ENCODE measurements at regions of chr9 and their contacts with region 1.

Region 1: DNA sequence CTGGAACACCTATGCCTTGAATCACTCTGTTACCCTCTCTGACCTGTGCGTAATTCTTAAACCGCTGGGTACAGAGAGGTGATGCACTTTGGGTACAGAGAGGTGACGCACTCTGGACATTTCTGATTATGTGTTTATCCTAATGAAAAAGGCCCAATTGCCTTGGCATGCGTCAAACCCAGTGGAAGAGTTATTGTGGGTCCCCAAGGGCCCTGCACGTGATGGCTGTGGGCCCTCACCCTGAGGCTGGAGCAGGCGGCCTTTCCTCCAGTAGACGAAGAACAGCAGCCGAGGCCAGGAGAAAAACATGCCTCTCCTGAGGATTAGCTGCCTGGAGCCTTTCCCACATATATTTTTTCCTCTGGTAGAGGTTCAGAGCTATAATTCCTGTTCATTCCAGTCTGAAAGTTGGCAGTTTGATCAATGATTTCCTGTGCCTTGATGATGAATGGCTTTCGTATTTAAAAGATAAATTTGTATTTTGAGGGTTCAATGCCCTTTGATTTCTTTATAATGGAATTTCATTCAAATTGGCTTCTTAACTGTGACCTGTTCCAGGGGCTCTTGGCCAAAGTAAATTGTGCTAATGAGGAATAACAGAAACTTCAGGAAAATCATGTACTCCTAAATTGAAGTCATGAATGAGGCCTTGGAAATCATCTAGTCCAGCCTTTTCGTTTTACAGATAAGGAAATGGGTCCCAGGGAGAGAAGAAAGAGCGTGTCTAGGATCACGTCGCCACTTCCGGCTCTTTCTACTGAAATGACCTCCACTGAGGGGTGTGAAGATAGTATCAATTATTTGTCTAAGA is 22.8 kb downstream of the ACER2 start:
- DNase-seq: peak; percentile 72 to 73
- ATAC-seq: peak; percentile 83 to 95 (median 93)
- H3K4me3 ChIP-seq: no peak overlapping the region
- H3K27ac ChIP-seq: peak overlapping the region; percentile 18 to 82 (median 75)
- H3K4me1 ChIP-seq: peaks cover 8 to 38% (median 19%) of the 10 kb centered on the region in 9 donors
- H3K27me3 ChIP-seq: no peaks in the 10 kb centered on the region
- CTCF ChIP-seq: no peak

Region 2: DNA sequence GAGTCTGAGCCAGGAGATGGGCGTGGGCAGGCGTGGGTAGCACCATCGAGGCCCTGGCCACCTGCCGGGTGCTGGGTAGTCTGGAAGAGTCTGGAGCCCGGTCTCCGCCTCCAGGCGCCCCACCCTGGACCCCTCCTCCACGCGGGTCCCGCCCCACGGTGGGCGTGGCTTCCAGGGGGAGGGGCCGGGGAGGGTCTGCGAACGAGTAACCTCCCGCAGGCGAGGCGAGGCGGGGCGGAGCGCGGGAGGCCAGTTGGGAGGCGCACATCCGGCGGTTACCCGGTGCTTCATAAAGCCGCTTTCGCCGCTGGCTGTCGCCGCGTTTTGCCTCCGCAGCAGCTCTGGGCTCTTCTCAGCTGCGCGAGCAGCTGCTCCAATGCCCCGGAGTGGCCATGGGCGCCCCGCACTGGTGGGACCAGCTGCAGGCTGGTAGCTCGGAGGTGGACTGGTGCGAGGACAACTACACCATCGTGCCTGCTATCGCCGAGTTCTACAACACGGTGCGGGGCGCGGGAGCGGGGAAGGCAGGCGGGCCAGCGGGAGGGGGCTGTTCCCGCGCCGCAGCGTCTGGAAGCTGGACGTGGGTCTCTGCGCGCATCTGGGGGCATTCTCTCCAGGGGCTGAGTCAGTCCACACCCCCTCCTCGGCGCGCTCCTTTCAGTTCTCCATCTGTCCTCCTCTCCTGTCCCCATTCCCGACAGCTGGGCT is 22.7 kb before region 1 on chr9 and contains the start of gene ACER2:
- intact Hi-C with region 1: loop called in 1 of 10 experiments (anchors 1 kb)
- DNase-seq: peak; percentile 96 to 98
- ATAC-seq: peak; percentile 97 to 100 (median 98)
- H3K4me3 ChIP-seq: peak within 1 kb of the TSS; percentile 70 to 98 (median 92)
- H3K27ac ChIP-seq: peak within 1 kb of the TSS; percentile 82 to 96 (median 90)
- H3K4me1 ChIP-seq: peaks cover 0 to 46% (median 22%) of the 10 kb centered on the region in 9 donors
- H3K27me3 ChIP-seq: no peaks in the 10 kb centered on the region
- CTCF ChIP-seq: peak in 4 of 9 donors; percentile 7 to 23 (median 20)
- total RNA-seq, gene ACER2: 1.7 to 8.7 (median 4.0) TPM

Measured in heart right ventricle (tissue), 16 donors.